ENCODE measurements at regions of chr1 and their contacts with region 1.

Region 1: GRCh38 chr1:112390775-112391602 is 5.0 kb upstream of the CTTNBP2NL start:
- DNase-seq: peak; percentile 87
- H3K4me3 ChIP-seq: peak overlapping the region in 5 of 8 donors; percentile 17 to 60 (median 24)
- H3K27ac ChIP-seq: peak overlapping the region; percentile 4 to 88 (median 69)
- H3K4me1 ChIP-seq: peaks cover 15 to 53% (median 36%) of the 10 kb centered on the region in 6 donors
- H3K27me3 ChIP-seq: peaks cover 0 to 8% (median 0%) of the 10 kb centered on the region in 7 donors
- CTCF ChIP-seq: peak; percentile 92 to 98 (median 96)
- POLR2A ChIP-seq: no peak

Region 2: DNA sequence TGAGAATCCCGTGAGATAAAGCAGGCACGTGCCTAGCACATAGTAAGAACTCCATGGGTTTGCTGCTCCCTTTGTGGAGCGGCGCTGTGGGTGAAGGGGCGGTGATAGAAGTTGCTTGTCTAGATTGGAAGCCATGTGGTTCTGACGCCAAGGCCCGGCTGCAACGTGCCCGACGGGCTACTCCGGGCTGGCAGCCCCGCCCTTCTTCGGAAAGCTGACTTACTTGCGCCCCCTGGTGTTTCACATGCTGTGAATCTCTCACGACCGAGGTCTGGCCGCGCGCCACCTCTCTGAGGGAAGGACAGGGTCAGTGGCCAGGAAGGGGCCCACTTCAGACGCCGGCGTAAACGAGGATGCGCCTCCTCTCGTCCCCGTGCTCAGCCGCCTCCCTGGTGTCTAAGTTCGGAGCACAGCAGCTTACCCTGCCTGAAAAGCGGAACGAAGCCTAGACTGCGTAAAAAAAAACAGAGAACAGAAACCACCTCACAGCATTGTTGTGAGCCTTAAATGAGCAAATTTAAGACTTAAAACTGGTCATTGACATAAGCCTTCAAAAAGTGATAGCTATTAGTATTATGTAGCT is 75.2 kb after region 1 on chr1:
- intact Hi-C with region 1: loop called (anchors 2 kb)
- DNase-seq: peak; percentile 97
- H3K4me3 ChIP-seq: peak overlapping the region in 6 of 8 donors; percentile 11 to 53 (median 16)
- H3K27ac ChIP-seq: peak overlapping the region in 7 of 8 donors; percentile 40 to 76 (median 57)
- H3K4me1 ChIP-seq: peaks cover 10 to 35% (median 23%) of the 10 kb centered on the region in 6 donors
- H3K27me3 ChIP-seq: peaks cover 0 to 19% (median 0%) of the 10 kb centered on the region in 7 donors
- CTCF ChIP-seq: peak; percentile 74 to 97 (median 89)
- POLR2A ChIP-seq: no peak

Region 3: DNA sequence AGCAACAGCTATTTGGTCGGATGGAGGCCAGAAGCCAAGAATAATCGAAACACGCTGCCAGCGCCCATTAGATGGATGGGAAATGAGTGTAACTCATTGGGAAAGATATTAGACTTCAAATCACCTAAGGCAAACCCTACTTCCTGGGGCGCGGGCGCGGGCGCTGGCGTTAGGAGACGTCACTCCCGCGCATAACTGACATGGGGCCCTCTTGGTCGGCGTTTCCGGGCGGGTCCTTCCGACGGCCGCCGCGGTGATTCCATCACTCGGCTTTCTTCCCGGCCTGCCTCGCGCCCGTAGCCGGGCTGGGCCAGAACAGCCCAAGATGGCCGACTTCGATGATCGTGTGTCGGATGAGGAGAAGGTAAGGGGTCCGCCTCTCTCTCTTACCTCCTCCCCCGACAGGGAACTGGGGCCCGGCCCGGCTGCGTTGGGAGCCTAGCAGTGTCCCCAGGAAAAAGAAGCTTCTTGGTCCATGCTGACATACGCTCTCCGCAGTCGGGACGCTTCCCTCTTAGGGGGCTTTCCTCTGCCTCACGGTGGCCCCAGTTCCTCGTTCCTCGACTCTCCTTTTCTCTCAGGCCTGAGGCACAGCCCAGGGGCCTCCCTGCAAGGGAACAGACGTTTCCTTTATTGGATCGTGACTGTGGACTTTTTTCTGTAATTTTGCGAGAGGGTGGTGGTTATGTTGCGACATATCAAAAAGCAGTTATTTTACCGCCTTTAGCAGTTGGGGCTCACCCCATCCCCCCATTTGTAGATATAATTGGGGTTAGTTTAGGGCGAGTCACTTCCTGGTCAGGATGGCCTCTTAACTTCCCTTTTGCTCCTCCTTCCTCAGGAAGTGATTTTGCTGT is 228.8 kb after region 1 on chr1 and contains the start of gene CAPZA1:
- intact Hi-C with region 1: loop called (anchors 10 kb)
- DNase-seq: peak; percentile 98
- H3K4me3 ChIP-seq: peak within 1 kb of the TSS; percentile 72 to 92 (median 82)
- H3K27ac ChIP-seq: peak within 1 kb of the TSS; percentile 96 to 100 (median 99)
- H3K4me1 ChIP-seq: peaks cover 40 to 70% (median 60%) of the 10 kb centered on the region in 6 donors
- H3K27me3 ChIP-seq: no peaks in the 10 kb centered on the region
- CTCF ChIP-seq: peak in 1 of 11 experiments; percentile 3
- POLR2A ChIP-seq: peak; percentile 40 to 58 (median 55)
- total RNA-seq, gene CAPZA1: 190 to 354 (median 259) TPM

Region 4: GRCh38 chr1:112706908-112707663 is 316.1 kb after region 1 on chr1 and contains the start of gene RHOC:
- intact Hi-C with region 1: loop called (anchors 5 kb)
- DNase-seq: peak; percentile 94
- H3K4me3 ChIP-seq: peak within 1 kb of the TSS; percentile 41 to 92 (median 72)
- H3K27ac ChIP-seq: peak within 1 kb of the TSS; percentile 76 to 97 (median 94)
- H3K4me1 ChIP-seq: peaks cover 34 to 59% (median 53%) of the 10 kb centered on the region in 6 donors
- H3K27me3 ChIP-seq: peaks cover 0 to 5% (median 0%) of the 10 kb centered on the region in 7 donors
- CTCF ChIP-seq: peak; percentile 68 to 94 (median 91)
- POLR2A ChIP-seq: peak in 1 of 3 donors; percentile 69
- total RNA-seq, gene RHOC: 125 to 292 (median 210) TPM

Region 5: DNA sequence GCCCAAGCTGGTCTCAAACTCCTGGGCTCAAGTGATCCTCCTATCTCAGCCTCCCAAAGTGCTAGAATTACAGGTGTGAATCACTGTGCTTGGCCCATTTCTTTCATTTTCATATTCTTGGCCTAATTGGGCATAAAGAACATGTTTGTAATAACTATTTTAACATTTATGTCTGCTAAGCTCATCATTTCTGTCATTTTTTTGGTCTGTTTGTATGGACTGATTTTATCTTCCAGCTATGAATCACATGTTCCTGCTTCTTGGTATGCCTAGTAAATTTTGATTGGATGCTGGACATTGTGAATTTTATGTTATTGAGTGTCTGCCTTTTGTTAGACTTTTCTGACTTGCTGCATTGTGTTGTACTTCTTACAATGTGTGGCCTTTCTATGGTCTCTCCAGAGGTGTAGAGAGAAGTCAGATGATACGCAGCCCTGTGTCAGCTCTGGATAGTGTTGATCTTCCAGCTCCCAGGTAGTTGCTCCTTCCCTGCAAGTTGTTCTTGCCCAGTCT is 363.2 kb after region 1 on chr1:
- intact Hi-C with region 1: no loop called
- DNase-seq: no peak
- H3K4me3 ChIP-seq: no peak overlapping the region
- H3K27ac ChIP-seq: no peak overlapping the region
- H3K4me1 ChIP-seq: no peaks in the 10 kb centered on the region
- H3K27me3 ChIP-seq: peaks cover 0 to 35% (median 3%) of the 10 kb centered on the region in 7 donors
- CTCF ChIP-seq: no peak
- POLR2A ChIP-seq: no peak